Panc1 (cell line): ENCODE measurements at regions of chr20 and their contacts with region 1.

Region 1: DNA sequence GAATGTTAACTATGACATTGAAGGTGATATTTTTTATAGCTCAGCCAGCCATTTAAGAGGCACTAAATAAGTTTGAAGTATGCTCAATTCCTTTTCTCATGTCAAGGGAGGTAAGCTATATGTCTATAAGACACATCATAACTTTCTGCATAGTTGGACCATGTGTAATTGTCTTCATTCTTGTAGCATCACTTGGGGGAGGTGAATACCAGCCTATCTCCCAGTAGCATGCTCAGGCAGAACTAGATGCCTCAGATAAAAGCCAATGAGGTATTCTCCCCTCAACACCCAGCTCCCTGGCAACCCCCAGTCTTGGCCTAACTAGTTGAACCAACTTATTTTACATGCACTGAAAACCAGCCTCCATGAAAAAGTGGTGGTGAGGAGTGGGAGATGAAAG is 158.3 kb upstream of the JAG1 start:
- DNase-seq: no peak
- ATAC-seq: no peak
- H3K4me3 ChIP-seq: no peak overlapping the region
- H3K27ac ChIP-seq: no peak overlapping the region
- H3K4me1 ChIP-seq: no peaks in the 10 kb centered on the region
- H3K27me3 ChIP-seq: no peaks in the 10 kb centered on the region
- CTCF ChIP-seq: no peak

Region 2: GRCh38 chr20:9829835-9830234 is 1002.3 kb before region 1 on chr20:
- CTCF ChIA-PET with region 1: no interaction called
- POLR2A ChIA-PET with region 1: interaction called, 10 read pairs
- in situ Hi-C with region 1: no loop called
- intact Hi-C with region 1: no loop called
- DNase-seq: no peak
- ATAC-seq: no peak
- H3K4me3 ChIP-seq: no peak overlapping the region
- H3K27ac ChIP-seq: no peak overlapping the region
- H3K4me1 ChIP-seq: no peaks in the 10 kb centered on the region
- H3K27me3 ChIP-seq: no peaks in the 10 kb centered on the region
- CTCF ChIP-seq: no peak

Region 3: DNA sequence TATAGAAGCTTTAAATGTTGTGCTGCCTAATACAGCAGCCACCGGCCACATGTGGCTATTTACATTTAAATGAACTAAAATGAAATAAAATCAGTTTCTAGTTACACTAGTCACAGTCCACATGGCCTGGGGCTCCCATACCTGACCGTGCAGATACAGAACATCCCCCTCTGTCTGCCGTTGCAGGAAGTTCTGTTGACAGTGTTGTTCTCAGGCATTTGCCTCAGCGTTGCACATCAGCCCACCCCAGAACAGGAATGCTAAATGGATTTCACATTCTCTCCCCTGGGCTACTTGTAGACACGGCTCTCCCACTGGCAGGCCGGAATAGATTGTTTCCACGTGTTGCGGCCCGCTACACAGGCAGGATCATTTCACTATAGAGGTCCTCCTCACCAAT is 184.7 kb before region 1 on chr20:
- CTCF ChIA-PET with region 1: no interaction called
- POLR2A ChIA-PET with region 1: no interaction called
- in situ Hi-C with region 1: no loop called
- intact Hi-C with region 1: no loop called
- DNase-seq: no peak
- ATAC-seq: peak; percentile 55; the same call in 1 of the 2 replicates
- H3K4me3 ChIP-seq: no peak overlapping the region
- H3K27ac ChIP-seq: no peak overlapping the region
- H3K4me1 ChIP-seq: no peaks in the 10 kb centered on the region
- H3K27me3 ChIP-seq: no peaks in the 10 kb centered on the region
- CTCF ChIP-seq: no peak

Region 4: GRCh38 chr20:10928841-10929421 is 96.8 kb after region 1 on chr20:
- CTCF ChIA-PET with region 1: no interaction called
- POLR2A ChIA-PET with region 1: no interaction called
- in situ Hi-C with region 1: no loop called
- intact Hi-C with region 1: no loop called
- DNase-seq: no peak
- ATAC-seq: no peak
- H3K4me3 ChIP-seq: no peak overlapping the region
- H3K27ac ChIP-seq: no peak overlapping the region
- H3K4me1 ChIP-seq: no peaks in the 10 kb centered on the region
- H3K27me3 ChIP-seq: no peaks in the 10 kb centered on the region
- CTCF ChIP-seq: no peak